ENCODE measurements at regions of chr6 and their contacts with region 1.

Region 1: GRCh38 chr6:149410557-149410956 is 10.5 kb downstream of the SUMO4 start:
- DNase-seq: no peak
- ATAC-seq: peak; percentile 81

Region 2: GRCh38 chr6:149324428-149324827 is 86.1 kb before region 1 on chr6:
- intact Hi-C with region 1: loop called (anchors 10 kb)
- DNase-seq: no peak
- ATAC-seq: peak; percentile 64

Measured in left ventricle myocardium superior (tissue), 1 donor.